Posterior cingulate gyrus (tissue), 11 donors: ENCODE measurements at regions of chr5 and their contacts with region 1.

Region 1: GRCh38 chr5:126656396-126657007 is 55.8 kb downstream of the PHAX start:
- DNase-seq: peak in 2 of 10 donors; percentile 17 to 31

Region 2: GRCh38 chr5:126490167-126490940 is 166.1 kb before region 1 on chr5:
- intact Hi-C with region 1: no loop called
- DNase-seq: peak in 2 of 10 donors; percentile 26 to 43

Region 3: DNA sequence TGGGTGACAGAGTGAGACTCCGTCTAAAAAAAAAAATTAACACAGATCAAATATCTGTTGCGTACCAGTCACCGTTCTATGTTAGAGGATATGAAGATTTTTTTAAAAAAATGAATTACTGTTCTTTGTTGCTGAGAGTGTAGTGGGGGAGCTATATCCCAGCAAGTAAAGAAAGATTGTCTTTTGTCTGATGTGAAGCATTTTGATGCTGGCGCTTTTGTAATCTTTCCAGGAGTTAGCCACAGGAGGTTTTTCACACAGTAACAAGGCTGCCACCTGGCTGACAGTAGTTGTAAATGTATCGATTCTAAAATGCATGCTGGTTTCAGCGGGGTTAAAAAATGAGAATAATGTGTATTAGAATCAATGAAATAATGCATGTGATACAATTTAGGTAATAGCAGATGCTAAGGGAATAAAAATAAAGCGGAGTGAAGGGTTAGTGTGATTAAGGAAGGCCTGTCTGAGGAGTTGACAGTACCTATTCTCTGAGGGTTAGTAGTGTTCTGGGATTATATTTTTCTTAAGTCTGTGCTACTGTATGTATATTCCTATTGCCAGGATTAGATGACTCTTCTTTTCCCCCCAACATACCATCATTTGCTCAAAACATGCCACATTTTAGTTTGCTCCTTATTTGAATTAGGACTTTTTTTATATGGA is 123.8 kb after region 1 on chr5:
- intact Hi-C with region 1: loop called (anchors 5 kb)
- DNase-seq: peak in 4 of 10 donors; percentile 13 to 50 (median 28)

Region 4: GRCh38 chr5:127088251-127089010 is 431.9 kb after region 1 on chr5:
- intact Hi-C with region 1: no loop called
- DNase-seq: no peak